Activated CD4-positive, alpha-beta T cell treated with anti-CD3 and anti-CD28 coated beads for 36 hours (primary cell): ENCODE measurements at regions of chr2 and their contacts with region 1.

Region 1: GRCh38 chr2:96536445-96537065 is at the start of gene ARID5A:
- DNase-seq: peak; percentile 97
- ATAC-seq: peak; percentile 66
- H3K4me3 Mint-ChIP-seq: peak within 1 kb of the TSS; percentile 97
- H3K27ac Mint-ChIP-seq: peak within 1 kb of the TSS; percentile 90
- H3K4me1 Mint-ChIP-seq: peaks cover 64% of the 10 kb centered on the region
- H3K27me3 Mint-ChIP-seq: no peaks in the 10 kb centered on the region
- total RNA-seq, gene ARID5A: 179 to 191 TPM

Region 2: GRCh38 chr2:96131152-96131812 is 405.3 kb before region 1 on chr2:
- CTCF ChIA-PET with region 1: no interaction called
- POLR2A ChIA-PET with region 1: no interaction called
- intact Hi-C with region 1: no loop called
- DNase-seq: peak; percentile 76
- ATAC-seq: peak; percentile 86
- H3K4me3 Mint-ChIP-seq: peak overlapping the region; percentile 5
- H3K27ac Mint-ChIP-seq: peak overlapping the region; percentile 91
- H3K4me1 Mint-ChIP-seq: peaks cover 18% of the 10 kb centered on the region
- H3K27me3 Mint-ChIP-seq: no peaks in the 10 kb centered on the region

Region 3: DNA sequence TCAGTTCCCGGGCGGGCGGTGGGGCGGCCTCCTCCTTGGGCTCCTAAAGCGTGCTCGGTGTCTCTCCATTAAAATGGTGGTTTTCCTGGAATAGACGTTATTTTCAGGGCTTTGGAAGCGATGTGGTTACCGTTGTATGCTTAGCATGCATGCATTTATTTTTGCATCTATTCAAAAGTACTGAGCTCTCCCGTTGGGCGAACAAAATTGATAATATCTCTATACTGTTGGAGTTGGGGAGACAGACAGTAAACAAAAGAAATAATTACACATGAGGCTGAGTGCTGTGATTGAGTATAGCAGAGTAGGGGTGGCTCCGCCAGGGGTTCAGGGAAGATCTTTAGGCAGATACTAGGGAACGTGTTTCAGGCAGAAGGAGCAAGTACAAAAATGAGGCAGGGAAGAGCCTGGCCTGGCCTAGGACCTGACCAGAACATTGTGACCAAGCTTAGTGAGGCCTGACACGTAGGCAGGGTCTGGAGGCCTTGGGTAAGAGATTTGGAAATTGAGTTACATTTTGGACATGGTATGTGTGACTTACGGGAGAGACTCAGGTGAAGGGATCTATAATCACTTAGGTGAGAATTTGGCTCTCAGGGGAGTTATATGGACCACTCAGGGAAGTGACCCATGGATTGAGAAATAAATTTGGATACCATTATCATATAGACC is 200.3 kb before region 1 on chr2:
- CTCF ChIA-PET with region 1: no interaction called
- POLR2A ChIA-PET with region 1: no interaction called
- intact Hi-C with region 1: loop called in 1 of 2 experiments (anchors 5 kb)
- DNase-seq: no peak
- ATAC-seq: no peak
- H3K4me3 Mint-ChIP-seq: peak overlapping the region; percentile 88
- H3K27ac Mint-ChIP-seq: peak overlapping the region; percentile 85
- H3K4me1 Mint-ChIP-seq: peaks cover 47% of the 10 kb centered on the region
- H3K27me3 Mint-ChIP-seq: no peaks in the 10 kb centered on the region

Region 4: GRCh38 chr2:96485751-96486651 is 50.6 kb before region 1 on chr2:
- CTCF ChIA-PET with region 1: interaction called, 4 read pairs
- POLR2A ChIA-PET with region 1: interaction called, 4 read pairs
- intact Hi-C with region 1: loop called (anchors 1 kb)
- DNase-seq: peak; percentile 94
- ATAC-seq: peak; percentile 95
- H3K4me3 Mint-ChIP-seq: peak overlapping the region; percentile 90
- H3K27ac Mint-ChIP-seq: peak overlapping the region; percentile 95
- H3K4me1 Mint-ChIP-seq: peaks cover 48% of the 10 kb centered on the region
- H3K27me3 Mint-ChIP-seq: no peaks in the 10 kb centered on the region

Region 5: DNA sequence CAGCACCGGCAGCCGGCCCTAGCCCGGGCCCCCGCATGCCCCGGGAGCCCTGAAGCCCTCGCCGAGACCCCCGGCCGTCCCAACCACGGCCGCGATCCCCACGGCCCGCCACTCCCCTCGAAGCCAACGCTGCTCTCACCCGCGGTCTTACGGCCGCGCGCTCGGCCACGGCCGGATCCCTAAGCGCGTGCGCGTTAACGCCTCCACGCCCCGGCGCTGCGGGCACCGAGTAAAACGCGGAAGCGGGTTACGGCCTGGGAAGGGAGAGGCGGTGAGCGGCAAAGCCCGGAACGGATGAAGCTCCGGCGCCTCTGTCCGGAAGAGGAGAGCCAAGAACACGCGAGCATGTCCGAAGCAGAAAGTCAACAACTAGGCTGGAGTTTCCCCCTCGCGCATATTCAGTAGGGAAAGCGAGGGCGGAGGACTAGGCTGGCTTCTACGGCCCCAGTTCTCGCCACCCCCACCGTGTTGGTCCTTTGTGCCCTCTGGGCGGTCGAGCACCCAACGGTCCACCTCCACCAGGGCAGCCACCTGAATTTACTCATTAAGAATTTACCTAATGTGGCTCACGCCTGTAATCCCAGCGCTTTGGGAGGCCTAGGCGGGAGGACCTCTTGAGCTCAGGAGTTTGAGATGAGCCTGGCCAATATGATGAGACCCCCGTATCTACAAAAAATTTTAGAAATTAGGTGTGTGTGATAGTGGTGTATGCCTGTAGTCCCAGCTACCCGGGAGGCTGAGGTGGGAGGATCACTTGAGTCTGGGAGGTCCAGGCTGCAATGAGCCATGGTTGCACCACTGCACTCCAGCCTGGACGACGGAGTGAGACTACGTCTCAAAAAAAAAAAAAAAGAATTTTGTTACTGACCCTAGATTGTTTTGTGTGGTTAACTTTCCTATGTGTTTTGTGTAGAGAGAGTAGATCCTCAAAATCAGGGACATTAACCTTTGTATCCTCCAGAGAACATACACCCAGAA is 101.9 kb after region 1 on chr2 and contains the start of gene KANSL3:
- CTCF ChIA-PET with region 1: interaction called, 3 read pairs
- POLR2A ChIA-PET with region 1: interaction called, 3 read pairs
- intact Hi-C with region 1: loop called (anchors 1 to 5 kb)
- DNase-seq: peak; percentile 94
- ATAC-seq: peak; percentile 86
- H3K4me3 Mint-ChIP-seq: peak within 1 kb of the TSS; percentile 91
- H3K27ac Mint-ChIP-seq: peak within 1 kb of the TSS; percentile 93
- H3K4me1 Mint-ChIP-seq: peaks cover 30% of the 10 kb centered on the region
- H3K27me3 Mint-ChIP-seq: no peaks in the 10 kb centered on the region
- total RNA-seq, gene KANSL3: 33.9 to 39.1 TPM

Region 6: GRCh38 chr2:98465456-98466226 is 1929.1 kb after region 1 on chr2:
- CTCF ChIA-PET with region 1: no interaction called
- POLR2A ChIA-PET with region 1: no interaction called
- intact Hi-C with region 1: loop called in 1 of 2 experiments (anchors 10 kb)
- DNase-seq: peak; percentile 78
- ATAC-seq: peak; percentile 16
- H3K4me3 Mint-ChIP-seq: peak overlapping the region; percentile 69
- H3K27ac Mint-ChIP-seq: peak overlapping the region; percentile 96
- H3K4me1 Mint-ChIP-seq: peaks cover 90% of the 10 kb centered on the region
- H3K27me3 Mint-ChIP-seq: no peaks in the 10 kb centered on the region